ENCODE measurements at regions of chr5 and their contacts with region 1.

Region 1: GRCh38 chr5:64768358-64769312 is at the starts of genes CWC27 and SREK1IP1:
- DNase-seq: peak; percentile 87 to 91
- H3K4me3 ChIP-seq: peak within 1 kb of the TSS; percentile 82
- H3K4me3 Mint-ChIP-seq: peak within 1 kb of the TSS; percentile 91
- H3K27ac Mint-ChIP-seq: peak within 1 kb of the TSS; percentile 100
- H3K4me1 ChIP-seq: peaks cover 11% of the 10 kb centered on the region
- H3K4me1 Mint-ChIP-seq: peaks cover 28% of the 10 kb centered on the region
- H3K27me3 ChIP-seq: no peaks in the 10 kb centered on the region
- H3K27me3 Mint-ChIP-seq: no peaks in the 10 kb centered on the region
- CTCF ChIP-seq: peak in 1 of 2 experiments; percentile 28
- total RNA-seq, gene CWC27: 32.9 TPM in 2 replicates
- total RNA-seq, gene SREK1IP1: 21.7 and 21.9 TPM in 2 replicates

Region 2: GRCh38 chr5:64634997-64635686 is 133.5 kb before region 1 on chr5:
- CTCF ChIA-PET with region 1: no interaction called
- POLR2A ChIA-PET with region 1: no interaction called
- intact Hi-C with region 1: loop called (anchors 5 kb)
- DNase-seq: peak in 1 of 2 experiments; percentile 21
- H3K4me3 ChIP-seq: no peak overlapping the region
- H3K4me3 Mint-ChIP-seq: no peak overlapping the region
- H3K27ac Mint-ChIP-seq: no peak overlapping the region
- H3K4me1 ChIP-seq: no peaks in the 10 kb centered on the region
- H3K4me1 Mint-ChIP-seq: no peaks in the 10 kb centered on the region
- H3K27me3 ChIP-seq: no peaks in the 10 kb centered on the region
- H3K27me3 Mint-ChIP-seq: peaks cover 9% of the 10 kb centered on the region
- CTCF ChIP-seq: peak; percentile 48 to 88

Region 3: GRCh38 chr5:64653766-64654560 is 114.7 kb before region 1 on chr5:
- CTCF ChIA-PET with region 1: no interaction called
- POLR2A ChIA-PET with region 1: no interaction called
- intact Hi-C with region 1: loop called (anchors 5 kb)
- DNase-seq: no peak
- H3K4me3 ChIP-seq: no peak overlapping the region
- H3K4me3 Mint-ChIP-seq: no peak overlapping the region
- H3K27ac Mint-ChIP-seq: no peak overlapping the region
- H3K4me1 ChIP-seq: peaks cover 15% of the 10 kb centered on the region
- H3K4me1 Mint-ChIP-seq: peaks cover 17% of the 10 kb centered on the region
- H3K27me3 ChIP-seq: no peaks in the 10 kb centered on the region
- H3K27me3 Mint-ChIP-seq: no peaks in the 10 kb centered on the region
- CTCF ChIP-seq: no peak

Measured in Caco-2 (cell line).